Activated naive CD4-positive, alpha-beta T cell treated with anti-CD3 and anti-CD28 coated beads for 36 hours (primary cell): ENCODE measurements at regions of chr15 and their contacts with region 1.

Region 1: DNA sequence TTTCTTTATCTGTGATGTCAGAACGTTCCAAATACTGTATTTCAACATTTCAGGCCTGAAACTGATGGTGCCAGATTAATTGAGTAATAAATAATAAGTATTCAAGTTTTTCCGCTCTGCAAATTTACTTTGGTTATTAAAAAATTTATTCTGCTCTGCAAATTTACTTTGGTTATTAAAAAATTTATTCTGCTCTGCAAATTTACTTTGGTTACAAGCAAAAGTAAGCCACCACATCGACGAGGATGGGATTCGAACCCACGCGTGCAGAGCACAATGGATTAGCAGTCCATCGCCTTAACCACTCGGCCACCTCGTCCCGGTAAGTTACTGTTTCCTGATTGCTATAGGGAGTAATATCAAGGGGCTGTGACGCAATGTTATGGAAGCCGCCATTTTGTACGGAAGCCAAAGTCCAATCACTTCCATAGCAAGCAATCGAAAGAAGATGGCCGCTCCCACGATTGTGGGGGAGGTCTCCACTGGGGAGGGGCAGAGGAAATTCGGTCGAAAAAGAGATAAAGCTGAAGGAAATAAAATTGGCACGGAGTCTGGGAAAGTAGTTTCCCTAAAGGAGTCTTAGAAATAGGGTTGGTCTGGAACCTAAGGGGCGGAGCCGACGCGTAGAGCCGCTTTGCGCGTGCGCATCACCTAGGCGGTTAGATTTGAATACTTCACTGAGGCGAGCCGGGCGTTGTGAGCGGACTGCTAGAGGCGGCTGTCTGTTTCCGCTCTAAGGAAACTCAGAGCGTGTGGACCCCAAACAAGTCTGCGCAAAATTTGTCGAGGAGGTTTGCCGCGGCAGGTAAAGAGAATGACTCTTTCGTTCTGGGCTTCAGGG is at the start of gene KNL1:
- DNase-seq: peak; percentile 95
- H3K4me3 Mint-ChIP-seq: peak within 1 kb of the TSS; percentile 97
- H3K27ac Mint-ChIP-seq: peak within 1 kb of the TSS; percentile 99
- H3K4me1 Mint-ChIP-seq: peaks cover 23% of the 10 kb centered on the region
- H3K27me3 Mint-ChIP-seq: peaks cover 5% of the 10 kb centered on the region
- total RNA-seq, gene KNL1: 31.0 to 32.7 TPM

Region 2: GRCh38 chr15:40440743-40441564 is 152.9 kb before region 1 on chr15 and contains the start of gene BAHD1:
- CTCF ChIA-PET with region 1: no interaction called
- intact Hi-C with region 1: loop called (anchors 2 kb)
- DNase-seq: peak; percentile 96
- H3K4me3 Mint-ChIP-seq: peak within 1 kb of the TSS; percentile 88
- H3K27ac Mint-ChIP-seq: peak within 1 kb of the TSS; percentile 54
- H3K4me1 Mint-ChIP-seq: peaks cover 60% of the 10 kb centered on the region
- H3K27me3 Mint-ChIP-seq: peaks cover 36% of the 10 kb centered on the region
- total RNA-seq, gene BAHD1: 9.9 to 11.7 TPM

Region 3: DNA sequence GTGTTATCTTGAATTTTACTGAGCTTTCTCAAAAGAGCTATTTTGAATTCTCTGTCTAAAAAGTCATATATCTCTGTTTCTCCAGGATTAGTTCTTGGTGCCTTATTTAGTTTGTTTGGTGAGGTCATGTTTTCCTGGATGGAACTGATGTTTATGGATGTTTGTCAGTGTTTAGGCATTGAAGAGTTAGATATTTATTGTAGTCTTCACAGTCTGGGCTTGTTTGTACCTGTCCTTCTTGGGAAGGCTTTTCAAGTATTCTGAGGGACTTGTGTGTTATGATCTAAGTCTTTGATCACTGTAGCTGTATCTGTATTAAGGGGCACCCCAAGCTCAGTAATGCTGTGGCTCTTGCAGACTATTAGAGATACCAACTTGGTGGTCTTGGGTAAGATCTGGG is 90.6 kb after region 1 on chr15:
- CTCF ChIA-PET with region 1: no interaction called
- intact Hi-C with region 1: loop called (anchors 2 kb)
- DNase-seq: no peak
- H3K4me3 Mint-ChIP-seq: no peak overlapping the region
- H3K27ac Mint-ChIP-seq: no peak overlapping the region
- H3K4me1 Mint-ChIP-seq: no peaks in the 10 kb centered on the region
- H3K27me3 Mint-ChIP-seq: no peaks in the 10 kb centered on the region

Region 4: DNA sequence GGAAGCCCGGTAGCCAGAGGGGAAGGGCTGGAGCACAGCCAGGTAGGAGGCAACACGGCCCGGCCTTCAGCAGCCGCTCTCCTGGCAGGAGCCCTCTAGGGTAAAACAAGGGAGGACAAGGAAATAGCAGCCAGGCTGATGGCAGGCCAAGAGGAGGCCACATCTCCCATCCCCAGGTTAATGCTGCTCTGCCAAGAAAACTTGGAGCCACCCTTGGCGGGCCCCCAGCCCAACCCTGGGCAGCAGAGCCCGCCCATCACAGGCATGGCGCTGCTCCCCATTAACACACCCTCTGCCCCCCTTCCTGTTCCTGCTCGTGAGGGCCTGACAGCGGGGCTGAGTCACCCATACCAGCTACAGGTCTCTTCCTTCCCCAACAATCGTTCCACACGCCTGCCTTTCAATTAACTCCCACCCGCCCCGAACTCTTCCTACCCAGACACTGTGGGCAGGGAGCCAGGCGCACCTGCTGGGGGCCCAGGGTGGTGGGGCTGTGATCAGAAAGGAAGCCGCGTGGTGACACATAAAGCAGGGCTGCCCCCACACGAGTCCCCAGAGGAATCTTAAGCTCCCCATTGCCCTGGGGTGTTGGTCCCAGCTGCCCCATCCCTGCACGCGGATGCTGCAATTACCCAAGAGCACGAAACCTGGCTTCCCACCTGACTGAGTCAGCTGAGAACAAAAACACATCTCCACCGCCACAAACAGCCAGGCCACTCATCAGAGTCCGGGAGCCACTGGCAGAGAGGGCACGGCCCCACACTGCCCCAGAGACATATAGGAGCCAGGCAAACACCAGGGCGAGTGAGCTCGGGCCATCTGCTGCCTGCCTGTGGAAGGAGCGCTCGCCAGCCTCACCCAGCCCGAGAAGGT is 175.7 kb after region 1 on chr15 and contains the start of gene C15orf62:
- CTCF ChIA-PET with region 1: interaction called, 3 read pairs
- intact Hi-C with region 1: loop called (anchors 1 kb)
- DNase-seq: peak; percentile 82
- H3K4me3 Mint-ChIP-seq: peak within 1 kb of the TSS; percentile 40
- H3K27ac Mint-ChIP-seq: peak within 1 kb of the TSS; percentile 87
- H3K4me1 Mint-ChIP-seq: peaks cover 42% of the 10 kb centered on the region
- H3K27me3 Mint-ChIP-seq: no peaks in the 10 kb centered on the region
- total RNA-seq, gene C15orf62: 0.10 to 0.33 TPM

Region 5: GRCh38 chr15:40906991-40907802 is 313.4 kb after region 1 on chr15:
- CTCF ChIA-PET with region 1: no interaction called
- intact Hi-C with region 1: no loop called
- DNase-seq: peak; percentile 75
- H3K4me3 Mint-ChIP-seq: peak overlapping the region; percentile 73
- H3K27ac Mint-ChIP-seq: peak overlapping the region; percentile 81
- H3K4me1 Mint-ChIP-seq: peaks cover 21% of the 10 kb centered on the region
- H3K27me3 Mint-ChIP-seq: no peaks in the 10 kb centered on the region

Region 6: GRCh38 chr15:40952901-40953712 is 359.3 kb after region 1 on chr15 and contains the start of gene CHAC1:
- CTCF ChIA-PET with region 1: no interaction called
- intact Hi-C with region 1: loop called (anchors 1 kb)
- DNase-seq: peak; percentile 99
- H3K4me3 Mint-ChIP-seq: peak within 1 kb of the TSS; percentile 94
- H3K27ac Mint-ChIP-seq: peak within 1 kb of the TSS; percentile 93
- H3K4me1 Mint-ChIP-seq: peaks cover 35% of the 10 kb centered on the region
- H3K27me3 Mint-ChIP-seq: no peaks in the 10 kb centered on the region
- total RNA-seq, gene CHAC1: 19.8 to 20.2 TPM

Region 7: DNA sequence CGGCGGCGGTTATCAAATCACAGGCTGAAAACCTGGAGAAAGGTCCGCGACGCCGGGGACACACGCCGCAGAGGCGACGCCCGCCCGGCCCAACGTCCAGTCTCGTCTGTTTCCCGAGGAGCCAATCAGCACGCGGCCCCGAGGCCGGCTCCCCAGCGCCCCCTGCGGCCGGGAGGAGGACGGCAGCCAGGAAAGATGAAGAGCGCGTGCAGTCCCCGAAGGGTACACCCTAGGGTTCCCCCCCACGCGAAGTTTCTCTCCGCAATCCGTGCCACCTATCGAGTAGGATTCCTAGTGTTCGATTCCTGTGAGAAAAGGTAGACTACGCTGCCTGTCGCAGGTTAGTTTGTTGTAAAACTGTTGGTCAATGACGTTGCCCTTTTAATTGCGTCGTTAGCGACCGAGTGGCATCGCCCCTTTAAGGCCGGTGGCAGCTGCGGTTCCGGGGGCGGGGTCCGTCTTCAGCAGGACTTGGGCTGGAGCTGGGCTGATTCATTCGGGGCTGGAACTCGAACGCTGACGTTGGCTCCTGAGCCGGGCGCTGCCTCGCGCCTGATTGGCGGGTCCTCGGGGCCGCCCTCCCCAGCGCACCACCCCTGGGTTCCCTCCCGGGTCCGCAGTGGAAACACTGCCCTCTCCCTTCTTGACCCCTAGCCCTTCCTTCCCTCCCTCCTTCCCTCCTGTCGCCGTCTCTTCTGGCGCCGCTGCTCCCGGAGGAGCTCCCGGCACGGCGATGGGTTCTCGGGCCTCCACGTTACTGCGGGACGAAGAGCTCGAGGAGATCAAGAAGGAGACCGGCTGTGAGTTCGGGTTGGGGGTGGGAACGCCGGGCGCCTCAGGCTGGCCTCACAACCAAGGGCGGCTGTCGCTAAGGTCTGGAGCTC is 637.1 kb after region 1 on chr15 and contains the starts of genes CHP1 and EXD1:
- CTCF ChIA-PET with region 1: no interaction called
- intact Hi-C with region 1: loop called (anchors 2 kb)
- DNase-seq: peak; percentile 98
- H3K4me3 Mint-ChIP-seq: peak within 1 kb of the TSS; percentile 88
- H3K27ac Mint-ChIP-seq: peak within 1 kb of the TSS; percentile 87
- H3K4me1 Mint-ChIP-seq: peaks cover 22% of the 10 kb centered on the region
- H3K27me3 Mint-ChIP-seq: no peaks in the 10 kb centered on the region
- total RNA-seq, gene CHP1: 37.7 to 39.8 TPM
- total RNA-seq, gene EXD1: not detected